ENCODE measurements at regions of chr5 and their contacts with region 1.

Region 1: DNA sequence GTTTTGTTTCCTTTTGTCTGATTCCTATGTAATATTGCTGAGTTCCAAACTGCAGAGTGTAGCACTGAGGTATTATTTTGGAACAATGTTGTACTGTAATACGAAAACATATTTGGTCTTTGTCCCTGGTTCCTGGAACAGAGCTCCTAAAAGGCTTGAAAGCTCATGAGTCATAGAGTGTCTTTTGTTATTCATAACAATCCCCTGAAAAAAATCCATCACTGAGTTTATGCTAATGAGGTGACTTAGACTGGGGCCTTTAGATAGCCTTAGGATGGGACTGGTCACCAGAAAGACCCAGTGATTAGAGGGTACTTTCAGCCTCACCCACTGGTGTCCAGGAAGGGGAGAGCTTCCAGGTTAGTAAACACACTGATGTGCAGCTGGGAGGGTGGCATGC is 132.7 kb upstream of the POU5F2 start:
- DNase-seq: no peak
- ATAC-seq: no peak
- H3K4me3 ChIP-seq: no peak overlapping the region
- H3K4me3 Mint-ChIP-seq: no peak overlapping the region
- H3K27ac ChIP-seq: no peak overlapping the region
- H3K27ac Mint-ChIP-seq: no peak overlapping the region
- H3K4me1 ChIP-seq: no peaks in the 10 kb centered on the region
- H3K4me1 Mint-ChIP-seq: no peaks in the 10 kb centered on the region
- H3K27me3 ChIP-seq: no peaks in the 10 kb centered on the region
- H3K27me3 Mint-ChIP-seq: no peaks in the 10 kb centered on the region
- CTCF ChIP-seq: no peak

Region 2: DNA sequence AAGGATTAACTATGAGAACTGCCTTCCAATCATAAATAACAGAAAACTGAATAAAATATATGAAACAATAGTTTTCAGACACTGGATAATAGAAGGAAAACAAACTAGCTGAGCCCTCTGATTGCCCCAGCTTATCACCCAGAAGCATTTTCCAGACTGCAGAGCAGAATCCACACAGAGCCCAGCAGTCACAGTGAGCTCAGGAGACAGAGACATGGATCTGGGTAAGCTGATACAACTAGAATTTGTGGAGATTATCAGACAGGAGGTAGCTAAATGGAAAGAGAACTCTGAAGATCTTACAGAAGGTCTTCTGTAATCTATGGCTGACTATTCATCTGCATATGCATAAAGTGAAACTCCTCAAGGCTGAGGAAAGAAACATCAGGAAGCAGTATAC is 421.8 kb before region 1 on chr5:
- CTCF ChIA-PET with region 1: no interaction called
- POLR2A ChIA-PET with region 1: no interaction called
- intact Hi-C with region 1: no loop called
- DNase-seq: no peak
- ATAC-seq: no peak
- H3K4me3 ChIP-seq: no peak overlapping the region
- H3K4me3 Mint-ChIP-seq: no peak overlapping the region
- H3K27ac ChIP-seq: no peak overlapping the region
- H3K27ac Mint-ChIP-seq: no peak overlapping the region
- H3K4me1 ChIP-seq: no peaks in the 10 kb centered on the region
- H3K4me1 Mint-ChIP-seq: no peaks in the 10 kb centered on the region
- H3K27me3 ChIP-seq: no peaks in the 10 kb centered on the region
- H3K27me3 Mint-ChIP-seq: peaks cover 2% of the 10 kb centered on the region
- CTCF ChIP-seq: no peak

Region 3: GRCh38 chr5:93926831-93927620 is 52.9 kb after region 1 on chr5:
- CTCF ChIA-PET with region 1: no interaction called
- POLR2A ChIA-PET with region 1: no interaction called
- intact Hi-C with region 1: loop called in 1 of 2 experiments (anchors 10 kb)
- DNase-seq: no peak
- ATAC-seq: no peak
- H3K4me3 ChIP-seq: no peak overlapping the region
- H3K4me3 Mint-ChIP-seq: no peak overlapping the region
- H3K27ac ChIP-seq: no peak overlapping the region
- H3K27ac Mint-ChIP-seq: no peak overlapping the region
- H3K4me1 ChIP-seq: no peaks in the 10 kb centered on the region
- H3K4me1 Mint-ChIP-seq: no peaks in the 10 kb centered on the region
- H3K27me3 ChIP-seq: no peaks in the 10 kb centered on the region
- H3K27me3 Mint-ChIP-seq: no peaks in the 10 kb centered on the region
- CTCF ChIP-seq: no peak

Measured in CD8-positive, alpha-beta T cell (primary cell).